CD4-positive, alpha-beta T cell (primary cell): ENCODE measurements at regions of chr22 and their contacts with region 1.

Region 1: GRCh38 chr22:41832553-41833368 is at the start of gene SREBF2:
- DNase-seq: peak; percentile 96 to 99 (median 98)
- ATAC-seq: peak; percentile 93
- H3K4me3 ChIP-seq: peak within 1 kb of the TSS; percentile 96
- H3K4me3 Mint-ChIP-seq: peak within 1 kb of the TSS; percentile 97
- H3K27ac ChIP-seq: peak within 1 kb of the TSS; percentile 89 to 98
- H3K27ac Mint-ChIP-seq: peak within 1 kb of the TSS; percentile 100
- H3K4me1 ChIP-seq: peaks cover 30% of the 10 kb centered on the region
- H3K4me1 Mint-ChIP-seq: peaks cover 43% of the 10 kb centered on the region
- H3K27me3 ChIP-seq: no peaks in the 10 kb centered on the region
- H3K27me3 Mint-ChIP-seq: no peaks in the 10 kb centered on the region
- CTCF ChIP-seq: no peak
- total RNA-seq, gene SREBF2: 67.2 to 69.9 TPM

Region 2: GRCh38 chr22:41688365-41689211 is 144.2 kb before region 1 on chr22 and contains the start of gene SNU13:
- CTCF ChIA-PET with region 1: no interaction called
- POLR2A ChIA-PET with region 1: interaction called, 24 read pairs
- intact Hi-C with region 1: no loop called
- DNase-seq: peak; percentile 87 to 97 (median 90)
- ATAC-seq: peak; percentile 92
- H3K4me3 ChIP-seq: peak within 1 kb of the TSS; percentile 91
- H3K4me3 Mint-ChIP-seq: peak within 1 kb of the TSS; percentile 96
- H3K27ac ChIP-seq: peak within 1 kb of the TSS; percentile 95 to 98
- H3K27ac Mint-ChIP-seq: peak within 1 kb of the TSS; percentile 99
- H3K4me1 ChIP-seq: peaks cover 39% of the 10 kb centered on the region
- H3K4me1 Mint-ChIP-seq: peaks cover 45% of the 10 kb centered on the region
- H3K27me3 ChIP-seq: no peaks in the 10 kb centered on the region
- H3K27me3 Mint-ChIP-seq: no peaks in the 10 kb centered on the region
- CTCF ChIP-seq: no peak
- total RNA-seq, gene SNU13: 134 to 140 TPM

Region 3: GRCh38 chr22:41780746-41781505 is 51.8 kb before region 1 on chr22:
- CTCF ChIA-PET with region 1: interaction called, 4 read pairs
- POLR2A ChIA-PET with region 1: interaction called, 79 read pairs
- intact Hi-C with region 1: loop called (anchors 2 to 5 kb)
- DNase-seq: peak; percentile 78 to 98 (median 88)
- ATAC-seq: peak; percentile 91
- H3K4me3 ChIP-seq: peak overlapping the region; percentile 69
- H3K4me3 Mint-ChIP-seq: peak overlapping the region; percentile 86
- H3K27ac ChIP-seq: peak overlapping the region; percentile 77 to 94
- H3K27ac Mint-ChIP-seq: peak overlapping the region; percentile 96
- H3K4me1 ChIP-seq: peaks cover 57% of the 10 kb centered on the region
- H3K4me1 Mint-ChIP-seq: peaks cover 54% of the 10 kb centered on the region
- H3K27me3 ChIP-seq: no peaks in the 10 kb centered on the region
- H3K27me3 Mint-ChIP-seq: no peaks in the 10 kb centered on the region
- CTCF ChIP-seq: no peak

Region 4: GRCh38 chr22:41822317-41823060 is 10.3 kb before region 1 on chr22:
- CTCF ChIA-PET with region 1: interaction called, 5 read pairs
- POLR2A ChIA-PET with region 1: interaction called, 14 read pairs
- intact Hi-C with region 1: no loop called
- DNase-seq: peak in 6 of 14 experiments; percentile 6 to 87 (median 66)
- ATAC-seq: peak; percentile 92
- H3K4me3 ChIP-seq: no peak overlapping the region
- H3K4me3 Mint-ChIP-seq: no peak overlapping the region
- H3K27ac ChIP-seq: no peak overlapping the region
- H3K27ac Mint-ChIP-seq: peak overlapping the region; percentile 69
- H3K4me1 ChIP-seq: peaks cover 5% of the 10 kb centered on the region
- H3K4me1 Mint-ChIP-seq: peaks cover 18% of the 10 kb centered on the region
- H3K27me3 ChIP-seq: no peaks in the 10 kb centered on the region
- H3K27me3 Mint-ChIP-seq: no peaks in the 10 kb centered on the region
- CTCF ChIP-seq: peak; percentile 60

Region 5: GRCh38 chr22:41873391-41873790 is 40.6 kb after region 1 on chr22:
- CTCF ChIA-PET with region 1: no interaction called
- POLR2A ChIA-PET with region 1: interaction called, 6 read pairs
- intact Hi-C with region 1: loop called (anchors 5 kb)
- DNase-seq: peak in 5 of 14 experiments; percentile 31 to 72 (median 69)
- ATAC-seq: peak; percentile 80
- H3K4me3 ChIP-seq: no peak overlapping the region
- H3K4me3 Mint-ChIP-seq: peak overlapping the region; percentile 46
- H3K27ac ChIP-seq: peak overlapping the region; percentile 39 to 46
- H3K27ac Mint-ChIP-seq: peak overlapping the region; percentile 89
- H3K4me1 ChIP-seq: peaks cover 15% of the 10 kb centered on the region
- H3K4me1 Mint-ChIP-seq: peaks cover 29% of the 10 kb centered on the region
- H3K27me3 ChIP-seq: no peaks in the 10 kb centered on the region
- H3K27me3 Mint-ChIP-seq: no peaks in the 10 kb centered on the region
- CTCF ChIP-seq: no peak

Region 6: DNA sequence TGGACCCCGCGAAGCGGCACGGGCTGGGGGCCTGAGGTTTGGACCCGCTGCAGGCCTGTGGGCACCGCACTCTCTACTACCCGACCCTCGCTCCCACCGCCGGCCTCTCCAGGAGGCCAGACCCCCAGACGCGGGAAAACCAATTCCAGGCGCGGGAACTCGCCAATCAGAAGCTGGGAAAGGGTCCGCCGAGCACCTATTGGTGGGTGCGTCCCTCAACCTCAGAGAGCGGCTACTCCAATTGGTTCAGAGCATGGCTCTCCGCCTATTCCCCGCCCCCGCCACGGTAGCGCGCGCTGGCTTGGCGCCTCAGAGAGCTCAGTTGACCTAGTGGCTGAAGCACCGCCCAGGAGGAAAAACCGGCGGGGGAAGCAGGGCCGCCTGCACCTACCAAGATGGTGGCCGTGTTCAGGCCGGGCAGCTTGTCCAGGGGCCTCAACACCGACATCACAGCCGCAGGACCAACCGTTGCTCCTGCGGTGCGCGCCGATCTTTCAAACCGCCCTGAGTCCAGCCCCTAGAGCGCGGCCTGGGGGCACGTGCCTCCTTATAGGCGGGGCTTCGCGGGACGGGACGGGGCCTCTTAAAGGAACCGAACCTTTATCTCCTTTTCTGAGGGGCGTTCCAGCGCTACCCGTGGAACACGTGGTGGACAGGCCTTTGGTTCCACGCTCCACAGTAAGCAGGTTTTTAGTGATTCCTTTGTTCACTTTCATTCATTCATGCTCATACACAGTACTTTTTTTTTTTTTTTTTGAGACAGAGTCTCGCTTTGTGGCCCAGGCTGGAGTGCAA is 114.1 kb after region 1 on chr22 and contains the start of gene CENPM:
- CTCF ChIA-PET with region 1: interaction called, 17 read pairs
- POLR2A ChIA-PET with region 1: interaction called, 24 read pairs
- intact Hi-C with region 1: no loop called
- DNase-seq: peak; percentile 71 to 91 (median 82)
- ATAC-seq: peak; percentile 94
- H3K4me3 ChIP-seq: peak within 1 kb of the TSS; percentile 95
- H3K4me3 Mint-ChIP-seq: peak within 1 kb of the TSS; percentile 97
- H3K27ac ChIP-seq: no peak within 1 kb of the TSS
- H3K27ac Mint-ChIP-seq: peak within 1 kb of the TSS; percentile 62
- H3K4me1 ChIP-seq: peaks cover 25% of the 10 kb centered on the region
- H3K4me1 Mint-ChIP-seq: peaks cover 15% of the 10 kb centered on the region
- H3K27me3 ChIP-seq: no peaks in the 10 kb centered on the region
- H3K27me3 Mint-ChIP-seq: no peaks in the 10 kb centered on the region
- CTCF ChIP-seq: no peak
- total RNA-seq, gene CENPM: 7.6 to 8.4 TPM